Esophagus squamous epithelium (tissue), 5 donors: ENCODE measurements at regions of chr15 and their contacts with region 1.

Region 1: DNA sequence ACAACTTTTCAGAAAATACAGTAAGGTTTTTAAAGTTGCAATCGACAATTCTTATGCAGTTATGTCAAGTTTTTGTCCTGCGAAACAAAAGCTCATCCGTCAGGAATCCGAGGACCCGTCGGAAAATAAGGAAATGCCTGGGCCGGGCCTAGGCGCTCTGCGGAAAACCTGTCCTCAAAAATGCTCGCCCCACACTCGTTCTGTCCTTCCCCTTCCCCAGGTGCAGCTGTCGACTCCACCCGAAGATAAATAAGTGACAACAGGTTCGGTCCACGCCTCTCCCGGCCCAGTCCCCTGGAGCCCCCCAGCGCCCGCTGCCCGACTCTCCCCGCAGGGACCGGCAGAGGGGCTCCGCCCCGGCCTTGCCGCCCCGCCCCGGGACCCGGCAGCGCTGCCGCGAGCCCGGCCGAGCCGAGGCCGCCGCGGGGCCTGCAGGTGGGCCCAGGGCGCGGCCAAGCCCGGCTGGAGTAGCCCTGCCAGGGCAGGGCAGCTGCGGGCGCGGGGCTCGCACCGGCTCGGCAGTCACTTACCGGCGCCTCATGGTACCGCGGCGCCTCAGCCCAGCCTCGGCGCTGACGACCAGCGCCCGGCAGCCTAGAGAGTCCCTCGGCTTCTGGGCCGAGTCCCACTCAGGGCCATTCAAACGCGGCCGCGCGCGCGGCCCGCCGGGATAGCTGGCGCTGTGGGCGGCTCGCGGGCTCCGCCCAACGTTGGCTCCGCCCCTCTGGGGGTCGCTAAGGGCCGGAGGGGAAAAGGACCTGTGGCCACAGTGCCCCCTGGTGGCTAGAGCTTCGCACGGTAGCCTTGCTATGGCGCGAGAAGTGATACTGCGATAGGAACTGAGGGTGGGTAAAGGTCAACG is at the start of gene KATNBL1:
- DNase-seq: peak; percentile 61
- H3K4me3 ChIP-seq: peak within 1 kb of the TSS; percentile 46 to 75 (median 74)
- H3K27ac ChIP-seq: peak within 1 kb of the TSS; percentile 88 to 97 (median 94)
- H3K4me1 ChIP-seq: peaks cover 9 to 23% (median 11%) of the 10 kb centered on the region in 3 donors
- H3K27me3 ChIP-seq: no peaks in the 10 kb centered on the region
- CTCF ChIP-seq: peak; percentile 93 to 97 (median 96)
- POLR2A ChIP-seq: peak in 3 of 4 donors; percentile 83 to 86 (median 85)
- total RNA-seq, gene KATNBL1: 35.8 to 96.2 (median 74.3) TPM

Region 2: DNA sequence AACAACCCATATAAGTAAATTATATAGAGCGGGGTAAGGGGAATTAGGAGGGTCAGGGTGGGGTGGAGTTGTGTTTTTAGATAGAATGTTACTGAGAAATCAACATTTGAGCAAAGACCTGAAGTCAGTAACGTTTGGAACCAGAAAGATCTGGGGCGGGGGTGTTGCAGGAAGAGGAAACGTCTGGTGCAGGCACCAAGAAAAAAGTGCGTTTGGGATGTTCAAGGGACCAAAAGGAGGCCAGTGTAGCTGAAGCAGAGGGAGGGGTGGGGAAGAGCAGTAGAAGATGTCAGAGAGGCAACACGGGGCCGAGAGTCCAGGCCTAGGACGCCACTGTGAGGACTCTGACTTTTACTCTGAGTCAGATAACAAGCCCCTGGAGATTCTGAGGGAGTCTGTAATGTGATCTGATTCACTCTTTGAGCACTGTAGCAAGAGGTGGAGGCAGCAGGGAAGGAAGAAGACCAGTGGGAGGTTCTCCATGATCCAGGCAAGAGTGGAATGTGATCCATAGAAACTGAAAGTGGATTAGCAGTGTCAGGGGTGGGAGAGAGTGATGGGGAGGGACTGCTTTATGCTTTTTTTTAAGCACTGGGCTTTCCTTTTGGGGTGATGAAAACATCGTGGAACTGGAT is 420.6 kb before region 1 on chr15:
- intact Hi-C with region 1: no loop called
- DNase-seq: no peak
- H3K4me3 ChIP-seq: no peak overlapping the region
- H3K27ac ChIP-seq: no peak overlapping the region
- H3K4me1 ChIP-seq: no peaks in the 10 kb centered on the region
- H3K27me3 ChIP-seq: no peaks in the 10 kb centered on the region
- CTCF ChIP-seq: no peak
- POLR2A ChIP-seq: no peak

Region 3: DNA sequence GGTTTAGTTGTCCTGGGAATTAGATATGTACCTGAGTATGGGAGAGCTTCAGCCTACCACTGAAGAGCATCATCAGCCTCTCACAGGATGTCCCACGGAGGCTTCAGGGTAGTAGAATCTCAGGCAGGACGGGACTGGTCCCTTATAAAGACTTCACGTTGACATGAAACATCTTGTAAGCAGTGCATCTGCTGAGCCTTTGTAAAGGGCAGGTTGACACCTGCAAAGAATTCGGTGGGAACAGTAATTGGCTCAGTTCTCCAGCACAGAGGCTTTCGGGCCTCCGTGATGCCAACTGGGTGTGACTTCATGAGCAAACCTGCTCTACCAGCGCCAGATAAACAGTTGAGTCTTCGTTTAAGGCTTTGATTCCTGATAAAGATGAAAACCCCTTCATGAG is 143.7 kb before region 1 on chr15:
- intact Hi-C with region 1: loop called (anchors 5 kb)
- DNase-seq: no peak
- H3K4me3 ChIP-seq: no peak overlapping the region
- H3K27ac ChIP-seq: peak overlapping the region; percentile 70 to 80 (median 76)
- H3K4me1 ChIP-seq: peaks cover 0 to 26% (median 0%) of the 10 kb centered on the region in 3 donors
- H3K27me3 ChIP-seq: no peaks in the 10 kb centered on the region
- CTCF ChIP-seq: no peak
- POLR2A ChIP-seq: no peak

Region 4: DNA sequence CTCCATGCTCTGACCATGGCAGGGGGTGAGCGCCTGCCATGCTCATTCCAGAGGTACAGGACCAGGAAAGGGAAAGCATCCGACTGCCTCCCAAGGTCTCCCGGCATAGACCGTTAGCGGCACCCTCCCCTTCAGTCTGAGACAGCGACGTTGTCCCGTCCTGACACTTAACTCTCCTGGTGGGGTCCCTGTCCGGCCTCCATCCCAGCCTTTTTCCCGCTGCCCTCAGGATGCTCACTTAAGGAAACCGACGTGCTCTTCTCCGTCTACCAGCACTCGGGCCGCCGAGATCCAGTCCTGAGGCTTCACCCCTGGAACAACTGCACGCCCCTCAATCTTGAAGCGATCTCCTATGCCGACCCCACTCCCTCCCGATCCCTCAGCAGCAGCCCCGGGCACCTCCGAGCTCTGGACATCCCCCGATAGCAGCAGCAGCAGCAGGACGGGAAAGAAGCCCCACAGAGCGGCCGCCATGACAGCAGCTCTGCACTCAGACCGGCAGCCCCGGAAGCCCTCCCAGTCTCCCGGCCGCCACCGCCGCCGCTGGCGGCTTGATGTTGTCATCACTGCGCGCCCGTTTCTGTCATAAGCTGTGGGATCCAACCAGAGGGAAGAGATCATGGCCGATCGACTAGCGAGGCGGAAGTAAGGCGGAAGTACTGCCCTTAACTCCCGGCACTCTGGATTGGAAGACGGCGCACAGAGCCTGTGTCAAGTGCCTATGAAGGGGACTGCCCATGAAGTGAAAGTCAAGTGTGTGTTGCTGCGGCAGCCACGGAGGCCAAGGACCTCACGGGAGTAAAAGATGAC is 108.1 kb before region 1 on chr15 and contains the starts of genes EMC7 and PGBD4:
- intact Hi-C with region 1: loop called (anchors 10 kb)
- DNase-seq: peak; percentile 89
- H3K4me3 ChIP-seq: peak within 1 kb of the TSS; percentile 76 to 97 (median 94)
- H3K27ac ChIP-seq: peak within 1 kb of the TSS; percentile 87 to 94 (median 92)
- H3K4me1 ChIP-seq: peaks cover 10 to 42% (median 13%) of the 10 kb centered on the region in 3 donors
- H3K27me3 ChIP-seq: no peaks in the 10 kb centered on the region
- CTCF ChIP-seq: no peak
- POLR2A ChIP-seq: peak in 3 of 4 donors; percentile 24 to 85 (median 80)
- total RNA-seq, gene EMC7: 18.9 to 62.1 (median 36.1) TPM
- total RNA-seq, gene PGBD4: 0.70 to 1.7 (median 0.98) TPM